ENCODE measurements at regions of chr17 and their contacts with region 1.

Region 1: GRCh38 chr17:61837175-61838051 is 25.9 kb downstream of the BRIP1 start:
- DNase-seq: peak; percentile 74
- ATAC-seq: peak; percentile 79
- H3K4me3 ChIP-seq: no peak overlapping the region
- H3K27ac ChIP-seq: no peak overlapping the region
- H3K4me1 ChIP-seq: peaks cover 17 to 21% of the 10 kb centered on the region in 2 experiments
- H3K27me3 ChIP-seq: no peaks in the 10 kb centered on the region
- CTCF ChIP-seq: peak; percentile 74 to 92 (median 89)
- POLR2A ChIP-seq: no peak
- RAD21 ChIP-seq: peak; percentile 93

Region 2: GRCh38 chr17:60971515-60972369 is 865.7 kb before region 1 on chr17:
- CTCF ChIA-PET with region 1: no interaction called
- POLR2A ChIA-PET with region 1: interaction called, 3 read pairs
- RAD21 ChIA-PET with region 1: interaction called in 1 of 2 experiments, 3 read pairs
- intact Hi-C with region 1: loop called (anchors 5 kb)
- DNase-seq: peak; percentile 51
- ATAC-seq: peak; percentile 98
- H3K4me3 ChIP-seq: no peak overlapping the region
- H3K27ac ChIP-seq: no peak overlapping the region
- H3K4me1 ChIP-seq: no peaks in the 10 kb centered on the region
- H3K27me3 ChIP-seq: no peaks in the 10 kb centered on the region
- CTCF ChIP-seq: peak; percentile 80 to 94 (median 81); a peak in 5 of 6 replicates
- POLR2A ChIP-seq: no peak
- RAD21 ChIP-seq: peak; percentile 88

Region 3: DNA sequence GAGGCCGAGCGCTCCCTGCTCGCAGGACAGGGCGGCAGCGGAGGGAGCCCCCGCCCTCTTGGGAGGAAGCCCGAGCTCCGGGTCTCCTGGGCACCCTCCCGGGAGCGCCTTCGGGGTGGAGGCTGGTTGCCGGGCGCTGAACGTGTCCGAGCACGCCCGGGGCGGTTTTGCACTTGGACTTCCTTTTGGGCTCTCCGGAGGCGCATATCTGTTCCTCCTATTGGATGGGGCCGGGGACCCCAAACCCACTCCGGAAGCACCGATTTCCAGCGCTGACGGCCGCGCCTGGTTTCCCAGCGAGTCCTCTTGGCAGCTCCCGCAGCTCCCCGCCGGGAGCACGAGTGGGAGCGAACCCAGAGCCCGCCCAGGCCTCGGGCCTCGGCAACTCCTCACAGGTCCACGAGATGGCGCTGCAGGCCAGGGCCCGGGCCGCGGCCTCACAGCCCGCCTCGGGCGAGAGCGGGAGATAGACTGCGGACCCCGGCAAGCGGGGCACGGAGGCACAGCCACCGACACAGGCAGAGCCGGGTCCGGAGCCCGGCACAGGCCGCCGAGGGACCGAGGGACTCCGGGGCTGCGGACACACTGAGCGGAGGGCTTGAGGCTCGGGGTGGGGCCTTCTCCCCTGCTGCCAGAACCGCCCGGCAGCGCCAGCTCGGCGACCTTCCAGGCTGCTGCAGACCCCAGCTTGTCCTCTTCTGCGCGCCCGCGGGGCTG is 425.1 kb before region 1 on chr17:
- CTCF ChIA-PET with region 1: interaction called, 15 read pairs
- POLR2A ChIA-PET with region 1: no interaction called
- RAD21 ChIA-PET with region 1: interaction called in 1 of 2 experiments, 3 read pairs
- intact Hi-C with region 1: loop called (anchors 1 kb)
- DNase-seq: peak; percentile 49
- ATAC-seq: peak; percentile 62
- H3K4me3 ChIP-seq: peak overlapping the region; percentile 54 to 64
- H3K27ac ChIP-seq: peak overlapping the region; percentile 97
- H3K4me1 ChIP-seq: peaks cover 58 to 70% of the 10 kb centered on the region in 2 experiments
- H3K27me3 ChIP-seq: no peaks in the 10 kb centered on the region
- CTCF ChIP-seq: peak; percentile 94 to 100 (median 99)
- POLR2A ChIP-seq: no peak
- RAD21 ChIP-seq: peak; percentile 100

Region 4: DNA sequence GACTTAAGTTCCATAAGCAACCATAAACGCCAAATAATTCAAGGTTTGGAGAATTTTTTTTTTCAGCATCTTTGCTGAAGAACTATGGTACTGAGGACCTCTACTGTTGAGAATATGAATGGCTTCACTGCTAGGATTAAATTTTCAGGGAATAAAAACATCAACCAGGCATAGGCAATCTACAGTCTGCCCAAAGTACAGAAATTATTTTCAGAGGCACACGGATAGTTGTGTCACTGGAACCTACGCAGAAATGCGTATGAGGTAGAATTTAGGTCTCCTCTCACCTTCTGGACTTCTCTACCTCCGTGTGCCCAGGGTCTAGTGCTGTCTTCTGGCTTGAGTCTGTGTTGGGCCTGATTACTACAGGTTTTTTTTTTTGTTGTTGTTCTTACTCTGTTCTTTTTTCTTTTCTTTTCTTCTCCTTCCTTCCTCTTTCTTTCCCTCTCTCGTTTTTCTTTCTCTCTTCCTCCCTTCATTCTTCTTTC is 286.1 kb before region 1 on chr17:
- CTCF ChIA-PET with region 1: no interaction called
- POLR2A ChIA-PET with region 1: no interaction called
- RAD21 ChIA-PET with region 1: no interaction called
- intact Hi-C with region 1: loop called (anchors 5 kb)
- DNase-seq: peak; percentile 59
- ATAC-seq: peak; percentile 91
- H3K4me3 ChIP-seq: no peak overlapping the region
- H3K27ac ChIP-seq: peak overlapping the region; percentile 63
- H3K4me1 ChIP-seq: peaks cover 27 to 30% of the 10 kb centered on the region in 2 experiments
- H3K27me3 ChIP-seq: no peaks in the 10 kb centered on the region
- CTCF ChIP-seq: peak; percentile 82 to 95 (median 94)
- POLR2A ChIP-seq: no peak
- RAD21 ChIP-seq: peak; percentile 97

Region 5: GRCh38 chr17:61583242-61583641 is 254.2 kb before region 1 on chr17:
- CTCF ChIA-PET with region 1: interaction called, 9 read pairs
- POLR2A ChIA-PET with region 1: no interaction called
- RAD21 ChIA-PET with region 1: no interaction called
- intact Hi-C with region 1: loop called (anchors 2 kb)
- DNase-seq: peak; percentile 65
- ATAC-seq: peak; percentile 97
- H3K4me3 ChIP-seq: no peak overlapping the region
- H3K27ac ChIP-seq: peak overlapping the region; percentile 38; the same call in 1 of the 2 replicates
- H3K4me1 ChIP-seq: peaks cover 9 to 24% of the 10 kb centered on the region in 2 experiments
- H3K27me3 ChIP-seq: no peaks in the 10 kb centered on the region
- CTCF ChIP-seq: peak; percentile 44 to 74 (median 74); a peak in 5 of 6 replicates
- POLR2A ChIP-seq: no peak
- RAD21 ChIP-seq: peak; percentile 72

Measured in HCT116 (cell line).